PC-3 (cell line): ENCODE measurements at regions of chr3 and their contacts with region 1.

Region 1: GRCh38 chr3:78519281-78519680 is 1248.5 kb downstream of the ROBO1 start:
- DNase-seq: no peak
- ATAC-seq: no peak
- H3K4me3 ChIP-seq: no peak overlapping the region
- H3K27ac ChIP-seq: no peak overlapping the region
- H3K4me1 ChIP-seq: no peaks in the 10 kb centered on the region
- H3K27me3 ChIP-seq: no peaks in the 10 kb centered on the region
- CTCF ChIP-seq: no peak

Region 2: GRCh38 chr3:78569804-78570203 is 50.5 kb after region 1 on chr3:
- CTCF ChIA-PET with region 1: no interaction called
- POLR2A ChIA-PET with region 1: no interaction called
- intact Hi-C with region 1: loop called (anchors 10 kb)
- DNase-seq: no peak
- ATAC-seq: no peak
- H3K4me3 ChIP-seq: no peak overlapping the region
- H3K27ac ChIP-seq: no peak overlapping the region
- H3K4me1 ChIP-seq: no peaks in the 10 kb centered on the region
- H3K27me3 ChIP-seq: no peaks in the 10 kb centered on the region
- CTCF ChIP-seq: no peak